Panc1 (cell line): ENCODE measurements at regions of chr7 and their contacts with region 1.

Region 1: GRCh38 chr7:25565949-25566348 is 337.7 kb upstream of the NPVF start:
- DNase-seq: peak; percentile 82
- ATAC-seq: no peak
- H3K4me3 ChIP-seq: no peak overlapping the region
- H3K27ac ChIP-seq: no peak overlapping the region
- H3K4me1 ChIP-seq: peaks cover 4% of the 10 kb centered on the region; the same call in 1 of the 2 replicates
- H3K27me3 ChIP-seq: peaks cover 16% of the 10 kb centered on the region
- CTCF ChIP-seq: peak; percentile 98

Region 2: DNA sequence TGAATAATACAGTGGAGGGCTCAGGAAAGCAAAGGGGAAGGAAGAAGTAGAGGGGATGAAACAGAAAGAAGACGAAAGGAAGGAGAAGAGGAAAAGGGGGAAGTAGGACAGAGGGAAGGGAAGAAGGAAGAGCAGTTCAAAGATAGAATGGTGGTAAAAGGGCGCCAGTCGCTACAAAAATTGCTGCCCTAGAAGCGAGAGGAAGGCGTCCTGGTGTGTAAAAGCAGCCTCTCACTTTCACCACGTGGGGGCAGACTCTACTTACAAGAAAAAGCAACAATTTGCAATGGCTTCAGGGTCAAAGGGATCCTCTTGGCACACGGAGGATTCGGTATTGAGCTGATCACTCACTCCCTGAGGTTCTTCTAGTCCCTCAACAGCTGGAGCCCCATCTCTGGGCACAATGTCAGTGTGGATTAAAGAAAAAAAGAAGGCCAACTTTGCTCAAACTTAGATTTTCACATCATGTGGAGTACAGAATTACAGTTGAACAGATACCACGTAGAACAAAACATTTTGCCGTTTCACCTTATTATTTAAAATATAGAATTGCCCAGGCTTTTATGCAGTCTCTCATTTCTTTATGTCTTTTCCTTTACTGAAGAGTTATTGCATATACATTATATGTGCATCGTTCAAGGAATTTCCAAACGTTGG is 306.2 kb before region 1 on chr7:
- CTCF ChIA-PET with region 1: interaction called, 4 read pairs
- POLR2A ChIA-PET with region 1: no interaction called
- in situ Hi-C with region 1: no loop called
- intact Hi-C with region 1: loop called (anchors 1 kb)
- DNase-seq: peak; percentile 46
- ATAC-seq: peak; percentile 94
- H3K4me3 ChIP-seq: no peak overlapping the region
- H3K27ac ChIP-seq: no peak overlapping the region
- H3K4me1 ChIP-seq: no peaks in the 10 kb centered on the region
- H3K27me3 ChIP-seq: peaks cover 9% of the 10 kb centered on the region
- CTCF ChIP-seq: peak; percentile 91

Region 3: DNA sequence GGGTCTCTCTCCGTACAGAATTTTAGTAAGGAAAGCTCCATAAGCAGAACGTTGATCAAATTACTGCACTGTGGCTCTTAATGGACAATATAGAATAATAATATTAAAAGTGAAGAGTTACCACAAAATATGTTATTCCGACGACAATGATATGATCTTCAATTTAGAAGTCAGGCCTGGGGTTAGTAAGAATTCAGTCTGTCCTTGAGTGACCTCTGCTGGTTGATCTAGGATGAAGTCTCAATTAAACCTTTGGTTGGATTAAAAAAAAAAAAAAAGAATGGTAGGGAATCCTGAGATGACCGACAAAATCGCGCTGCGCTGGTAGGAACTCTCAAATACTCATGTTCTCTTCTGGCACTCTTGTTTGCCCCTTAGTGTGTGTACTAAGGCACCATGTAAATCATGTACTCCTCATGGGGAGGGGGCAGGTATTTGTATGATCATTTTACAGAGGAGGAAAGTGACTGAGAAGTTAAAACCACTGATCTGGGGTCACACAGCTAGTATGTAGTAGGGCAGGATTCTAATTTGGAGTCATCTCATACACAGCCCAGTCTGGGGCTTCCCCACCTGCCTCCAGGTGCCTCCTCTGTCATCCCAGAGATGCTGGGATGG is 176.4 kb before region 1 on chr7:
- CTCF ChIA-PET with region 1: interaction called, 16 read pairs
- POLR2A ChIA-PET with region 1: no interaction called
- in situ Hi-C with region 1: no loop called
- intact Hi-C with region 1: loop called (anchors 1 kb)
- DNase-seq: no peak
- ATAC-seq: peak; percentile 74
- H3K4me3 ChIP-seq: no peak overlapping the region
- H3K27ac ChIP-seq: no peak overlapping the region
- H3K4me1 ChIP-seq: no peaks in the 10 kb centered on the region
- H3K27me3 ChIP-seq: peaks cover 8% of the 10 kb centered on the region
- CTCF ChIP-seq: peak; percentile 76

Region 4: DNA sequence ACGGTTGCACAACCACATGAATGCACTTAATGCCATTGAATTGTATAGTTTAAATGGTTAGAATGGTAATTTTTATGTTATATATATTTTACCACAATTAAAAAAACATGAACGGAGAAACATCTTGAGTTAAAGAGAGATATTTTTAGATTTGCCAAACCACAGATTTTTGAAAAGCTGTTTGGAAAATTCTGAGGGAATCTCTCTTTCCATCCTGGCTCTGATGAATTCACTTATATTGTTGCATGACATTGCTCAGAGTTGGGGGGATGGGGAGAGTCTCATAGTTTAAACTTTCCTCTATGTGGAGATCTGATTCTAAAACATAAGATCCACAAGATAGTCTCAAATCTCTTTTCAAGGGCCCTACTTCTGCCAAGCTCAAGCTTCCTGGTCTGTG is 62.6 kb before region 1 on chr7:
- CTCF ChIA-PET with region 1: no interaction called
- POLR2A ChIA-PET with region 1: no interaction called
- in situ Hi-C with region 1: no loop called
- intact Hi-C with region 1: no loop called
- DNase-seq: no peak
- ATAC-seq: no peak
- H3K4me3 ChIP-seq: no peak overlapping the region
- H3K27ac ChIP-seq: no peak overlapping the region
- H3K4me1 ChIP-seq: no peaks in the 10 kb centered on the region
- H3K27me3 ChIP-seq: peaks cover 3% of the 10 kb centered on the region
- CTCF ChIP-seq: no peak

Region 5: GRCh38 chr7:26880852-26881251 is 1314.9 kb after region 1 on chr7:
- CTCF ChIA-PET with region 1: no interaction called
- POLR2A ChIA-PET with region 1: no interaction called
- in situ Hi-C with region 1: no loop called
- intact Hi-C with region 1: no loop called
- DNase-seq: no peak
- ATAC-seq: no peak
- H3K4me3 ChIP-seq: no peak overlapping the region
- H3K27ac ChIP-seq: no peak overlapping the region
- H3K4me1 ChIP-seq: no peaks in the 10 kb centered on the region
- H3K27me3 ChIP-seq: no peaks in the 10 kb centered on the region
- CTCF ChIP-seq: no peak